ENCODE measurements at regions of chr7 and their contacts with region 1.

Region 1: DNA sequence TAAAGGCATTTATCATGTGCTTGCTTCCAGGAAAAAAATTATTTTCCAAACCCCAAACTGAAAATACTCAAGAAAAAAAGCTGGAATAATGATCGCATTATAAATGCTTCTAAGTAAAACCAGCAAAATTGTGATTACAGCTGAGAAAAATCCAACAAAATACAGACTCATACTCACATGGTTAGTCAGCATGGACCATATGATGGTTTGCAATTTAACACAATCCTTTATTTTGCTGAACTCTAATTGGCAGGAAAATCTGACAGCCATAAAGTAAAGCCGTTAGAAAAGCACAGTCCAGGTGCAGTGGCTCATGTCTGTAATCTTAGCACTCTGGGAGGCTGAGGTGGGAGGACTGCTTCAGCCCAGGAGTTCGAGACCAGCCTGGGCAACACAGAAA is 59.6 kb downstream of the BRI3 start:
- DNase-seq: no peak
- H3K4me3 ChIP-seq: no peak overlapping the region
- H3K27ac ChIP-seq: no peak overlapping the region
- H3K4me1 ChIP-seq: no peaks in the 10 kb centered on the region
- H3K27me3 ChIP-seq: no peaks in the 10 kb centered on the region
- CTCF ChIP-seq: no peak
- EP300 ChIP-seq: no peak
- POLR2A ChIP-seq: no peak

Region 2: GRCh38 chr7:98354511-98355257 is 13.6 kb after region 1 on chr7:
- intact Hi-C with region 1: loop called (anchors 1 kb)
- DNase-seq: no peak
- H3K4me3 ChIP-seq: no peak overlapping the region
- H3K27ac ChIP-seq: no peak overlapping the region
- H3K4me1 ChIP-seq: no peaks in the 10 kb centered on the region
- H3K27me3 ChIP-seq: no peaks in the 10 kb centered on the region
- CTCF ChIP-seq: no peak
- EP300 ChIP-seq: no peak
- POLR2A ChIP-seq: no peak

Measured in sigmoid colon (tissue), 7 donors.